ENCODE measurements at regions of chr6 and their contacts with region 1.

Region 1: GRCh38 chr6:26025894-26026832 is 61.1 kb upstream of the HFE start:
- DNase-seq: peak; percentile 72 to 98 (median 76)
- ATAC-seq: peak; percentile 43
- H3K4me3 ChIP-seq: peak overlapping the region; percentile 46
- H3K27ac ChIP-seq: peak overlapping the region; percentile 99
- H3K4me1 ChIP-seq: peaks cover 13 to 40% of the 10 kb centered on the region in 2 experiments
- H3K27me3 ChIP-seq: no peaks in the 10 kb centered on the region
- CTCF ChIP-seq: peak; percentile 81 to 98 (median 97)
- EP300 ChIP-seq: peak; percentile 75
- POLR2A ChIP-seq: no peak
- RAD21 ChIP-seq: peak; percentile 48 to 77

Region 2: DNA sequence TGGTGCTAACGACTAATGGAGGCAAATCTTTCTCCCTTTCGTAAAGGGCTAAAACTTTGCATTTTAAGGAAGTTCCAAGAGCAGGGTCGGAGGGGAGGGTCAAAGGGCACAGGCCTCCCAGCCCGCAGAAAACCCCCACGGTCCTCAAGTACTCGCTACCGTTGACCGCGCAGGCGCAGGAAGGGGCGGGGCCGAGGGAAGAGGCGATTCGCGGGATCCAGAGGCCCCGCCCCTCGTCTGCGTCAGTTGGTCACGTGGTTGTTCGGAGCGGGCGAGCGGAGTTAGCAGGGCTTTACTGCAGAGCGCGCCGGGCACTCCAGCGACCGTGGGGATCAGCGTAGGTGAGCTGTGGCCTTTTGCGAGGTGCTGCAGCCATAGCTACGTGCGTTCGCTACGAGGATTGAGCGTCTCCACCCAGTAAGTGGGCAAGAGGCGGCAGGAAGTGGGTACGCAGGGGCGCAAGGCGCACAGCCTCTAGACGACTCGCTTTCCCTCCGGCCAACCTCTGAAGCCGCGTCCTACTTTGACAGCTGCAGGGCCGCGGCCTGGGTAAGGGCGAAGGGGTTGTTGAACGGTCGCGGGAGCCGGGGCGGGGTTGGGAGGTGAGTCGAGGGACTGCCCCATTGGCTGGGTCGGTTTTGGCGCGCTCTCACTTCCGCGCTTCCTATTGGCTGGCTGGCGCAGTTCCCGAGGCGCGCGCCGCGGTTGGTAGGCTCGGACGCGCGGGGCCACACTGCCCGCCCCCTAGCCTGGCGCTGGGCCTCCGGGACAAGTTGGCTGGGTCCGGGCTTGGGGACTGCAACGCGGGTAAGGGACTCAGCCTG is 1251.3 kb before region 1 on chr6 and contains the start of gene GMNN:
- CTCF ChIA-PET with region 1: no interaction called
- POLR2A ChIA-PET with region 1: no interaction called
- in situ Hi-C with region 1: no loop called
- intact Hi-C with region 1: loop called (anchors 10 kb)
- DNase-seq: peak; percentile 99 to 100 (median 99)
- ATAC-seq: peak; percentile 95
- H3K4me3 ChIP-seq: peak within 1 kb of the TSS; percentile 67
- H3K27ac ChIP-seq: peak within 1 kb of the TSS; percentile 99
- H3K4me1 ChIP-seq: peaks cover 8 to 12% of the 10 kb centered on the region in 2 experiments; a peak in 4 of 5 replicates
- H3K27me3 ChIP-seq: no peaks in the 10 kb centered on the region
- CTCF ChIP-seq: no peak
- EP300 ChIP-seq: peak; percentile 7
- POLR2A ChIP-seq: peak; percentile 99
- RAD21 ChIP-seq: no peak
- polyA plus RNA-seq, gene GMNN: 331 to 370 TPM

Region 3: GRCh38 chr6:25962149-25963127 is 63.7 kb before region 1 on chr6 and contains the start of gene TRIM38:
- CTCF ChIA-PET with region 1: no interaction called
- POLR2A ChIA-PET with region 1: interaction called, 16 read pairs
- in situ Hi-C with region 1: no loop called
- intact Hi-C with region 1: no loop called
- DNase-seq: peak; percentile 68 to 88 (median 77)
- ATAC-seq: peak; percentile 90
- H3K4me3 ChIP-seq: peak within 1 kb of the TSS; percentile 51
- H3K27ac ChIP-seq: peak within 1 kb of the TSS; percentile 86
- H3K4me1 ChIP-seq: peaks cover 6 to 19% of the 10 kb centered on the region in 2 experiments; a peak in 3 of 5 replicates
- H3K27me3 ChIP-seq: no peaks in the 10 kb centered on the region
- CTCF ChIP-seq: no peak
- EP300 ChIP-seq: no peak; the same call in 1 of the 2 replicates
- POLR2A ChIP-seq: peak; percentile 91
- RAD21 ChIP-seq: 0 out of 4 replicates have a peak, but pooled peaks of 1 of the 2 experiments have one; percentile 12
- polyA plus RNA-seq, gene TRIM38: 1.7 to 2.3 TPM

Region 4: DNA sequence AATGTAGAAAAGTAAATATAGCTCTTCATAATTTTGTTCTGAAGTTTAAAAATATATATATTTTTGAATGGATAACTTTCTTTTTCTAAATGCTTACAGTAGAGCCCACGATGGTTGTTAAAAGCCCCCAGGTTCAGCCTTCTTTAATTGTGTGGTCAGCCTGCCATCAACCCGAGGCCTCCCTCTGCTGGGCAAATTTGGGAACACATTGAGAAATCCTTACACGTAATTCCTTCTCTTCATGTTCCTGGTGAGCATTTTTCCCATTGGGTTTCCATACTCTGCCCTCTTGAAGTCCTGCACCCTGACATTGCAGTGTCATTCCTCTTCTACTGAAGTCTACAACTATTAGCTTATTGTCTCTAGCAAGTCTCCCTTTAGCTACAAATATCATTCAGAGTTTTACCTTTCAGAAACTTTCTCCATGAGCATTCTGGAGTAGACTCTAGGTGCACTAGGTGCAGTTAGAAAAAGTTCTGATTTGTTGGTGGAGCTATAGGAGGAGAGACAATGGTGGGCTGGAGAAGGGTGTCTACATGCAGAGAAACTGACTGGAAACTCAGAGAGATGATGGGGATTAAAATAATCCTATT is 23.0 kb before region 1 on chr6:
- CTCF ChIA-PET with region 1: no interaction called
- POLR2A ChIA-PET with region 1: interaction called, 206 read pairs
- in situ Hi-C with region 1: no loop called
- intact Hi-C with region 1: no loop called
- DNase-seq: peak; percentile 75 to 81 (median 76)
- ATAC-seq: peak; percentile 87
- H3K4me3 ChIP-seq: no peak overlapping the region
- H3K27ac ChIP-seq: no peak overlapping the region
- H3K4me1 ChIP-seq: peaks cover 5 to 10% of the 10 kb centered on the region in 2 experiments; a peak in 4 of 5 replicates
- H3K27me3 ChIP-seq: no peaks in the 10 kb centered on the region
- CTCF ChIP-seq: peak; percentile 77 to 87 (median 87)
- EP300 ChIP-seq: no peak
- POLR2A ChIP-seq: no peak
- RAD21 ChIP-seq: peak; percentile 64 to 77

Region 5: DNA sequence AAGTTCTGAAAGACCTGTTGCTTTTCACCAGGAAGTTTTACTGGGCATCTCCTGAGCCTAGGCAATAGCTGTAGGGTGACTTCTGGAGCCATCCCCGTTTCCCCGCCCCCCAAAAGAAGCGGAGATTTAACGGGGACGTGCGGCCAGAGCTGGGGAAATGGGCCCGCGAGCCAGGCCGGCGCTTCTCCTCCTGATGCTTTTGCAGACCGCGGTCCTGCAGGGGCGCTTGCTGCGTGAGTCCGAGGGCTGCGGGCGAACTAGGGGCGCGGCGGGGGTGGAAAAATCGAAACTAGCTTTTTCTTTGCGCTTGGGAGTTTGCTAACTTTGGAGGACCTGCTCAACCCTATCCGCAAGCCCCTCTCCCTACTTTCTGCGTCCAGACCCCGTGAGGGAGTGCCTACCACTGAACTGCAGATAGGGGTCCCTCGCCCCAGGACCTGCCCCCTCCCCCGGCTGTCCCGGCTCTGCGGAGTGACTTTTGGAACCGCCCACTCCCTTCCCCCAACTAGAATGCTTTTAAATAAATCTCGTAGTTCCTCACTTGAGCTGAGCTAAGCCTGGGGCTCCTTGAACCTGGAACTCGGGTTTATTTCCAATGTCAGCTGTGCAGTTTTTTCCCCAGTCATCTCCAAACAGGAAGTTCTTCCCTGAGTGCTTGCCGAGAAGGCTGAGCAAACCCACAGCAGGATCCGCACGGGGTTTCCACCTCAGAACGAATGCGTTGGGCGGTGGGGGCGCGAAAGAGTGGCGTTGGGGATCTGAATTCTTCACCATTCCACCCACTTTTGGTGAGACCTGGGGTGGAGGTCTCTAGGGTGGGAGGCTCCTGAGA is 61.3 kb after region 1 on chr6 and contains the start of gene HFE:
- CTCF ChIA-PET with region 1: no interaction called
- POLR2A ChIA-PET with region 1: interaction called, 34 read pairs
- in situ Hi-C with region 1: no loop called
- intact Hi-C with region 1: no loop called
- DNase-seq: peak; percentile 59 to 75 (median 66)
- ATAC-seq: peak; percentile 92
- H3K4me3 ChIP-seq: peak within 1 kb of the TSS; percentile 56
- H3K27ac ChIP-seq: peak within 1 kb of the TSS; percentile 67
- H3K4me1 ChIP-seq: peaks cover 9% of the 10 kb centered on the region in 2 experiments; a peak in 4 of 5 replicates
- H3K27me3 ChIP-seq: no peaks in the 10 kb centered on the region
- CTCF ChIP-seq: peak in 1 of 3 experiments; percentile 2; a peak in 1 of 6 replicates
- EP300 ChIP-seq: no peak
- POLR2A ChIP-seq: peak; percentile 56; the same call in 1 of the 2 replicates
- RAD21 ChIP-seq: 0 out of 4 replicates have a peak, but pooled peaks of 1 of the 2 experiments have one; percentile 1
- polyA plus RNA-seq, gene HFE: 0.17 to 0.31 TPM

Region 6: DNA sequence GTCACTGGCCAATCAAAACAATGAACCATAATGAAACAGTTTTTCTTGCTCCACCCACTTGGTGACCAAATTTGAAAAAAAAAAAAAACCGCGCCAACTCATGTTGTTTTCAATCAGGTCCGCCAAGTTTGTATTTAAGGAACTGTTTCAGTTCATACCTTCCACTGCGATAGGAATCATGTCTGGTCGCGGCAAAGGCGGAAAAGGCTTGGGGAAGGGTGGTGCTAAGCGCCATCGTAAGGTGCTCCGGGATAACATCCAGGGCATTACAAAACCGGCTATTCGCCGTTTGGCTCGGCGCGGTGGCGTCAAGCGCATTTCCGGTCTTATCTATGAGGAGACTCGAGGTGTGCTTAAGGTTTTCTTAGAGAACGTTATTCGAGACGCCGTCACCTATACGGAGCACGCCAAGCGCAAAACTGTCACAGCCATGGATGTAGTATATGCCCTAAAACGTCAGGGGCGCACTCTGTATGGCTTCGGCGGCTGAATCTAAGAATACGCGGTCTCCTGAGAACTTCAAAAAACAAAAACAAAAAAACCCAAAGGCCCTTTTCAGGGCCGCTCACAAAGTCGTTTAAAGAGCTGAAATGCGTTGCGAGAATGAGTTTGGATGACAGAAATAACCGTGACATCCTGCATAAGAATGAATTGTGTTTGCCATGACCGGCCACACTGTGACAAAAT is 77.8 kb after region 1 on chr6:
- CTCF ChIA-PET with region 1: interaction called, 17 read pairs
- POLR2A ChIA-PET with region 1: interaction called, 149 read pairs
- in situ Hi-C with region 1: loop called (anchors 5 kb)
- intact Hi-C with region 1: loop called (anchors 2 kb)
- DNase-seq: peak; percentile 78 to 98 (median 86)
- ATAC-seq: peak; percentile 91
- H3K4me3 ChIP-seq: peak overlapping the region; percentile 30
- H3K27ac ChIP-seq: peak overlapping the region; percentile 92
- H3K4me1 ChIP-seq: peaks cover 3 to 20% of the 10 kb centered on the region in 2 experiments; a peak in 3 of 5 replicates
- H3K27me3 ChIP-seq: no peaks in the 10 kb centered on the region
- CTCF ChIP-seq: peak; percentile 53 to 71 (median 61)
- EP300 ChIP-seq: peak; percentile 96
- POLR2A ChIP-seq: peak; percentile 100
- RAD21 ChIP-seq: peak; percentile 29 to 46; a peak in 3 of 4 replicates

Region 7: DNA sequence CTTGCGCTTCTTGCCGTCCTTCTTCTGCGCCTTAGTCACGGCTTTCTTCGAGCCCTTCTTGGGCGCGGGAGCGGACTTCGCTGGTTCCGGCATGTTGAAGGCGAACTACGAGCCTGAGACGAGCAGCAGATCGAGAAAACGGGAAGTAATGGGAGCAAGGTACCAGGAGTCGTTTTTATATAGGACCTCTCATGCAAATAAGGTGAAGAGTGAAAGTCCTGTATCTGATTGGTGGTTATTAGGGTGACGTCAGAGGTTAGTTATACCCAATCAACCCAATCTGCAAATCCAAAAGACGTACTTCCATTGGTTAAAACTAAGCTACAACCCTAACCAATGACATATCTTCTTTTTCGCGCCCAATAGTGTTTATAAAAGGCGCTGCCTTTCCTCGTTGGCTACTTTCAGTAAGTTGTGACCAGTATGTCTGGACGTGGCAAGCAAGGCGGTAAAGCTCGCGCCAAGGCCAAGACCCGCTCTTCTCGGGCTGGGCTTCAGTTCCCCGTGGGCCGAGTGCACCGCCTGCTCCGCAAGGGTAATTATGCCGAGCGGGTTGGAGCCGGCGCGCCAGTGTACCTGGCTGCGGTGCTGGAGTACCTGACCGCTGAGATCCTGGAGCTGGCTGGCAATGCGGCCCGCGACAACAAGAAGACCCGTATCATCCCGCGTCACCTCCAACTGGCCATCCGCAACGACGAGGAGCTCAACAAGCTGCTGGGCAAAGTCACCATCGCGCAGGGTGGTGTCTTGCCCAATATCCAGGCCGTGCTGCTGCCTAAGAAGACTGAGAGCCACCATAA is 1120.7 kb after region 1 on chr6:
- CTCF ChIA-PET with region 1: no interaction called
- POLR2A ChIA-PET with region 1: interaction called, 20 read pairs
- in situ Hi-C with region 1: no loop called
- intact Hi-C with region 1: no loop called
- DNase-seq: peak; percentile 93 to 99 (median 98)
- ATAC-seq: peak; percentile 68
- H3K4me3 ChIP-seq: peak overlapping the region; percentile 71
- H3K27ac ChIP-seq: peak overlapping the region; percentile 94
- H3K4me1 ChIP-seq: peaks cover 4 to 13% of the 10 kb centered on the region in 2 experiments
- H3K27me3 ChIP-seq: no peaks in the 10 kb centered on the region
- CTCF ChIP-seq: no peak
- EP300 ChIP-seq: no peak; the same call in 1 of the 2 replicates
- POLR2A ChIP-seq: peak; percentile 100
- RAD21 ChIP-seq: no peak; a peak in 1 of 4 replicates